ACHN (cell line): ENCODE measurements at regions of chr10 and their contacts with region 1.

Region 1: GRCh38 chr10:92419740-92420545 is 129.0 kb downstream of the MARCHF5 start:
- DNase-seq: no peak

Region 2: GRCh38 chr10:92087750-92088395 is 332.1 kb before region 1 on chr10:
- in situ Hi-C with region 1: loop called (anchors 25 kb)
- DNase-seq: peak; percentile 86